Mammary epithelial cell (primary cell): ENCODE measurements at regions of chr5 and their contacts with region 1.

Region 1: DNA sequence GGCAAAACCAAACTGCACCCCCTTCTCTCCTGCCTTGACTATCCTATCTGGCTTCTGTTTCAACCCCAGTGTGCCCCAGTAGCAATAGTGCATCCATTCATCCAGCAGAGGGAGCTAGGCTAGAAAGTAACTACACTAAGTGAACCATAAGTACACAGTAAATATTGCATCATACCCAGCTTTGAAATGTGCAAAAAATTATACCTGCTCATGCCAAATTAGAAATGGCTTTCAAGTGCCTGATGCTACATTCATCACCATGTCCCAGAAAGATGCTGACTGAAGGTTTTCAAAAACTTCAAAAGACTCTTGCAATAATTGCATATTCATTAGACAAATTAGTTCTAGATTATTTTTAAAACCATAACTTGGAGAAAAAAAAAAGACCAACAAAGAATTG is 153.5 kb downstream of the PRELID2 start:
- DNase-seq: peak; percentile 63
- H3K4me3 ChIP-seq: no peak overlapping the region
- H3K27ac ChIP-seq: no peak overlapping the region
- H3K4me1 ChIP-seq: no peaks in the 10 kb centered on the region
- H3K27me3 ChIP-seq: no peaks in the 10 kb centered on the region
- CTCF ChIP-seq: peak; percentile 92 to 94

Region 2: DNA sequence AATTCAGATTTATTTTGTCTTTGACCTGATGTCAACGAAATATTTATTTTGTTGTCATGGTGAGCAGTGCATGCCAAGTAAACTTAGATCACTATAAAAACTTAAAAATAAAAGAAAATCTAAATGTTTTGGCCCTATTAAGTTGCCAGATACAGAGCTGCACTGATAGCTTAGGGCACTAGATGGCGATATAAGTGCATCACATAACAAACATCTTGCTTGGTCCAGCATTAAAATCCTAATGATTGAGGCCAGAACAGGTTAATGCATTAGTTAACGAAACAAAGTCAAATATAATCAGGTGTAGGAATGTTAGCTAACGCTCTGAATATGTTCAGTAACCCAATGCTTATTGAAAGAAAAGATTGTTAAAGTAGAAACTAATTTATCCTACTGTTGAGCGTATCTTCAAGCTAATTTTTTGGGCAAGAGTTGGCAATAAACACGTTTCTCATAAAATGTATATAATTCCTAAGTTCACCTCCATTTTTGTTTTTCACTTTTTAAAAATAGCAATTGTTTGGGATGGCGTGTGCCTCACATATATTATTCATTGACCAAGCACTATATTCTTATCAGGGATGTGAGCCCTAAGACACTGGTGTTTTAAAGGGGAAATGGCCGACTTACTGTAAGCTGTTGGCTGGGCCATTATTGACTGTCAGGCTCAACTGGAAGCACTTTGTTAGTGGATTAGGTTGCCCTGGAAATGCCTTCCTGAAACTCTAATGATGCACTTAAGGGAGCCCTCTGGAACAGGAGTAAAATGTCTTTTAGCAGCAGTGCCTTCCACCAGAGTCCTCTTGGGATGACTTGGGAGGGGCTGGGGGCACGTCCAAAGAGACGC is 1477.7 kb before region 1 on chr5:
- CTCF ChIA-PET with region 1: interaction called, 5 read pairs
- dilution Hi-C with region 1: no loop called
- in situ Hi-C with region 1: no loop called
- intact Hi-C with region 1: loop called (anchors 5 kb)
- DNase-seq: peak; percentile 46
- H3K4me3 ChIP-seq: no peak overlapping the region
- H3K27ac ChIP-seq: no peak overlapping the region
- H3K4me1 ChIP-seq: peaks cover 3% of the 10 kb centered on the region
- H3K27me3 ChIP-seq: peaks cover 12% of the 10 kb centered on the region
- CTCF ChIP-seq: peak; percentile 90 to 96

Region 3: DNA sequence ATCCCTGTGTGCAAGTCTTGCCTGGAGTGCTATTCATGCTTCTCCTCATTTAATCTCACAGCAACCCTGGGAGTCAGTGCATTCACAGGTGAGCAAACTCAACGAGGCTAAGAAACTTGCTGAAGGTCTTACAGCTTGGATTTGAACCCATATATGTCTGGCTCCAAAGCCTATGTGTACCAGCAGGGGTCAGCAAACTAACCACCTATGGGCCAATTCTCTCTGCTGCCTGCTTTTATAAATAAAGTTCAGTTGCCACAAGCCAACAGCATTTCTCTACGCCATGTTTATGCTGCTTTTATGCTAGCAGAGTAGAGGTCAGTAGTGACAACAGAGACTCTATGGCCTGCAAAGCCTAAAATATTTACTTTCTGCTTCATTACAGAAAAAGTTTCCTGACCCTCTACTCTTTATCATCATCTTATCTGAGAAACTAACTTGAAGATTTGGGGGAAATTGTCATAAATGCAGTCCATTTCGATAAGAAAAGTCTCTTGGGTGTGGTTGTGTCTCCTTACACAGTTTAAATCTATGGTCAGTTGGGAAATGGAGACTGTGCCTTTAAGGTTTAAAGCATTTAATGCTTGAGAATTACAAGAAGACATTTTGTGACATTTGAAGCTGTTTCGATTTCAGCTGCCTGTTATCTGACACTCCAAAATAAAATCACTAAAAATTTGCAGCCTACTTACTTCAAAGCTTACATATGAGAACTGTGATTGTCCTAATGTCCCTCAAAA is 15.7 kb after region 1 on chr5:
- CTCF ChIA-PET with region 1: interaction called, 27 read pairs
- dilution Hi-C with region 1: no loop called
- in situ Hi-C with region 1: no loop called
- intact Hi-C with region 1: no loop called
- DNase-seq: peak; percentile 19
- H3K4me3 ChIP-seq: no peak overlapping the region
- H3K27ac ChIP-seq: no peak overlapping the region
- H3K4me1 ChIP-seq: no peaks in the 10 kb centered on the region
- H3K27me3 ChIP-seq: no peaks in the 10 kb centered on the region
- CTCF ChIP-seq: peak; percentile 63 to 65

Region 4: DNA sequence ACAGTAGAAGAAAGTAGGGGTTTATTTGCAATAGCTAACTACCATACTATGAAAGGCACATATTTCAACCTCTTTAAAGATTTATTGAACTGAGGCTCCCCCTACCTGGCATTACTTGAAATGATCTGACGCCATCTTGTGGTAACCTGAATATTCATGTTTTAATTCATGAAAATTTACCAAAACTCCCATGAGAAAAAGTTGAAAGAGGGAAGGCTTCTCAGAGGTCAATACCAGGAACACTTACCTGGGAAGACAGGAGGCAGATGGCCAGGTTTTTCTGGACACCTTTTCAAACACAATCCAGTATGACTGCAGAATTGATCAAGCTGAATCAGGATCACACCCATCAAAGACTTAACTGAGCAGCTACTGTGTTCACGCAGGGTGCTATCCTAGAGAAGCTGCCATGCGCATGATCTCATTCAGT is 144.1 kb after region 1 on chr5:
- CTCF ChIA-PET with region 1: no interaction called
- dilution Hi-C with region 1: no loop called
- in situ Hi-C with region 1: loop called (anchors 5 to 10 kb)
- intact Hi-C with region 1: loop called (anchors 1 kb)
- DNase-seq: peak; percentile 25
- H3K4me3 ChIP-seq: no peak overlapping the region
- H3K27ac ChIP-seq: no peak overlapping the region
- H3K4me1 ChIP-seq: peaks cover 5% of the 10 kb centered on the region
- H3K27me3 ChIP-seq: no peaks in the 10 kb centered on the region
- CTCF ChIP-seq: peak; percentile 87 to 90

Region 5: DNA sequence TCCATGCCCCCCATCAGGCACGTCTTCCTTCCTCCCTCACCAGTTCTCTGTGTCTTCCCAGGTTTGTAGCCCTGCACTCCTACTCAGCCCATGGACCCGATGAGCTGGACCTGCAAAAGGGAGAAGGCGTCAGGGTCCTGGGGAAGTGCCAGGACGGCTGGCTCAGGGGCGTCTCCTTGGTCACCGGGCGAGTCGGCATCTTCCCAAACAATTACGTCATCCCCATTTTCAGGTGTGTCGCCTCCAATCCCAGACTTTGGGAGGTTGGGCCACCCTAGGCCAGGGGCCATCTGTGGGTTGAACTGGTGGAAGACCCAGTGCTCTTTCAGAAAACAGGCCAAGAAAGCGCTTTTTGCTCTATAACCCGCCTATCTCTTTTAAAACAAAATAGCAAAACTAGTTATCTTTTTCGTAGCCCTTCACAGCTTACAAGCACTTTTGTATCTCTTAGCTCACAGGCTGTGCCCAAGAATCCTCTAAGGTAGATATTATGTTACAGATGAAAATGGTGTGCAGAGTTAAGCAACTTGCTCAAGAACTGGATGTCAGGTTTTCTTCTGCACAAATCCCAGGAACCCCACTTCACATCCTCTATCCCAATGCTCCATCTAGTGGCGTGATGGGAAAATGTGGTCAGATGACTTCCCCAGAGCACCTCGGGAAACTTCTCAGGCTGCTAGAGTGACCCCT is 367.5 kb after region 1 on chr5:
- CTCF ChIA-PET with region 1: no interaction called
- dilution Hi-C with region 1: no loop called
- in situ Hi-C with region 1: no loop called
- intact Hi-C with region 1: loop called (anchors 5 kb)
- DNase-seq: peak; percentile 61
- H3K4me3 ChIP-seq: no peak overlapping the region
- H3K27ac ChIP-seq: no peak overlapping the region
- H3K4me1 ChIP-seq: peaks cover 20% of the 10 kb centered on the region
- H3K27me3 ChIP-seq: no peaks in the 10 kb centered on the region
- CTCF ChIP-seq: peak; percentile 75 to 78

Region 6: GRCh38 chr5:146426853-146427618 is 745.4 kb after region 1 on chr5:
- CTCF ChIA-PET with region 1: no interaction called
- dilution Hi-C with region 1: no loop called
- in situ Hi-C with region 1: no loop called
- intact Hi-C with region 1: loop called (anchors 5 kb)
- DNase-seq: peak; percentile 43
- H3K4me3 ChIP-seq: no peak overlapping the region
- H3K27ac ChIP-seq: no peak overlapping the region
- H3K4me1 ChIP-seq: peaks cover 7% of the 10 kb centered on the region
- H3K27me3 ChIP-seq: no peaks in the 10 kb centered on the region
- CTCF ChIP-seq: peak; percentile 53 to 67